Heart left ventricle (tissue), 16 donors: ENCODE measurements at regions of chr6 and their contacts with region 1.

Region 1: GRCh38 chr6:132962936-132963868 is 148.8 kb downstream of the RPS12 start:
- DNase-seq: peak; percentile 44 to 76 (median 71)
- ATAC-seq: peak; percentile 74 to 87 (median 78)
- H3K4me3 ChIP-seq: no peak overlapping the region
- H3K27ac ChIP-seq: no peak overlapping the region
- H3K4me1 ChIP-seq: peaks cover 0 to 22% (median 7%) of the 10 kb centered on the region in 12 donors
- H3K27me3 ChIP-seq: no peaks in the 10 kb centered on the region
- CTCF ChIP-seq: peak; percentile 53 to 70 (median 60)
- POLR2A ChIP-seq: no peak

Region 2: DNA sequence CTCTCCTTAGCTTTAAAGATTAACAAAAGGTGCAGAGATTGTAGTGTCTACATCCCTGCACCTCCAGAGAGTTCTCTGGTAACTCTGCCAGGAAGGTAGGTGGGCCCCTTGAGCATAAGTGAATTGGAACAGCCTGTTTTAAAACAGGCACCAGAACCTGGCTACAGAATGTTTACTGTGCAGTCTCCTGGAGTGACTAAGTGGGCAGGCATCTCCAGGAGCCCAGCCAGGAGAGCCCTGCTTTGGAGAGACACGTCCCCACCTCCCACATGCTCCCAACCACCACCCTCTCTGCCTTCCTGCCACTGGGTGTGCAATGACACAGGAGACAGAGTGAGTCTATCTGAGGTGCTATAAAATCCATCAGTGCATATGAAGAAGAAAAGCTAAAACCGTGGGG is 167.7 kb after region 1 on chr6:
- intact Hi-C with region 1: loop called in 1 of 10 experiments (anchors 10 kb)
- DNase-seq: peak; percentile 77 to 93 (median 84)
- ATAC-seq: peak; percentile 98 to 99 (median 98)
- H3K4me3 ChIP-seq: no peak overlapping the region
- H3K27ac ChIP-seq: peak overlapping the region; percentile 22 to 86 (median 68)
- H3K4me1 ChIP-seq: peaks cover 0 to 23% (median 1%) of the 10 kb centered on the region in 12 donors
- H3K27me3 ChIP-seq: no peaks in the 10 kb centered on the region
- CTCF ChIP-seq: peak in 6 of 12 donors; percentile 4 to 42 (median 30)
- POLR2A ChIP-seq: no peak

Region 3: DNA sequence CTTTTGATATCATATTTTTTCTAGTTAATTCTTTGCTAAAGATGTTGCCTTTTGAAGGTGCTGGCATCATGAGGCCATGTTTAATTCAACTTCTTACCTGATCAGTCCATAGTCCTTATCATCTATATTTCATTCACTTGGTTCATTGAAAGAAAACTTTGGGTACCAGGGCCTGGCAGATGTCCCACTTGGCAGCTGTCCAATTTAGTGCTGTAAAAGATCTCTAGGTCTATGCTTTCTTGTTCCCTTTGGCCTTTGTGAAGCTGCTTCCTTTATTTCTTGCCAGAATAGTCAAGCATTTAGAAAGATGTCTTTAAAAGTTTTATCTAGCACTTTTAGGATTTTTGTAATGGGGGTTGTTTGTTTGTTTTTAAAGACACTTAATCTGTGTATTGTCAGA is 216.3 kb after region 1 on chr6:
- intact Hi-C with region 1: loop called in 4 of 10 experiments (anchors 10 kb)
- DNase-seq: no peak
- ATAC-seq: no peak
- H3K4me3 ChIP-seq: no peak overlapping the region
- H3K27ac ChIP-seq: no peak overlapping the region
- H3K4me1 ChIP-seq: no peaks in the 10 kb centered on the region
- H3K27me3 ChIP-seq: no peaks in the 10 kb centered on the region
- CTCF ChIP-seq: no peak
- POLR2A ChIP-seq: no peak

Region 4: GRCh38 chr6:133241086-133241900 is 278.1 kb after region 1 on chr6 and contains the start of gene EYA4:
- intact Hi-C with region 1: loop called in 4 of 10 experiments (anchors 5 to 10 kb)
- DNase-seq: peak; percentile 23 to 73 (median 50)
- ATAC-seq: peak; percentile 56 to 75 (median 70)
- H3K4me3 ChIP-seq: peak within 1 kb of the TSS; percentile 38 to 73 (median 62)
- H3K27ac ChIP-seq: peak within 1 kb of the TSS; percentile 80 to 93 (median 82)
- H3K4me1 ChIP-seq: peaks cover 0 to 22% (median 0%) of the 10 kb centered on the region in 12 donors
- H3K27me3 ChIP-seq: peaks cover 0 to 66% (median 15%) of the 10 kb centered on the region in 9 donors
- CTCF ChIP-seq: no peak
- POLR2A ChIP-seq: no peak
- total RNA-seq, gene EYA4: 14.6 to 29.6 (median 22.6) TPM

Region 5: DNA sequence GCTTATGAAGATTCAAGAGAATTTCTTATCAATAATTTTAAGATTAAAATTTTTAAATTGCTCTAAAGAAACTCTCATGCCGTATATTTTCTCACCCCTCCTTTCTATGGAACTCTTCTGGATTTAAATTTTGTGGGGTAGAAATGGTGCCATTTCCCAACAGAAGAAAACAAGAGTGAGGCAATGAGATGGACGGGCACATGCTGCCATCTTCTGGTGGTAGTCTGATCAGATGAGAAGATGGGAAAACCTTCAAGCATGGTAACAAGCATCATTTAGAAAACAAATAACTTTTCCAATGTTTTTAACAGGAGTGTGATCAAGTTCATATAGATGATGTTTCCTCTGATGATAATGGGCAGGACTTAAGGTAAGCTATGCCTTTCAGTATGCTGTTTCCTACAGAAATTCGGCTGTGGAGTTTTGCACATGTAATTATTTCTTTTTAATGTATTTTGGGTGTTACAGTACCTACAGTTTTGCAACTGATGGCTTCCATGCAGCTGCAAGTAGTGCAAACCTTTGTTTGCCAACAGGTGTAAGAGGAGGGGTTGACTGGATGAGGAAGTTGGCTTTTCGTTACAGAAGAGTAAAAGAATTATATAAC is 549.3 kb after region 1 on chr6:
- intact Hi-C with region 1: loop called in 8 of 10 experiments (anchors 2 to 10 kb)
- DNase-seq: peak in 2 of 5 donors; percentile 33 to 35
- ATAC-seq: no peak
- H3K4me3 ChIP-seq: no peak overlapping the region
- H3K27ac ChIP-seq: no peak overlapping the region
- H3K4me1 ChIP-seq: no peaks in the 10 kb centered on the region
- H3K27me3 ChIP-seq: peaks cover 0 to 2% (median 0%) of the 10 kb centered on the region in 9 donors
- CTCF ChIP-seq: peak; percentile 17 to 70 (median 58)
- POLR2A ChIP-seq: no peak